HepG2 (cell line): ENCODE measurements at regions of chr20 and their contacts with region 1.

Region 1: GRCh38 chr20:40990542-40991120 is 38.0 kb upstream of the TOP1 start:
- DNase-seq: peak; percentile 93
- ATAC-seq: peak; percentile 100
- H3K4me3 ChIP-seq: peak overlapping the region in 1 of 3 experiments; percentile 13; a peak in 1 of 6 replicates
- H3K27ac ChIP-seq: no peak overlapping the region
- H3K4me1 ChIP-seq: peaks cover 19% of the 10 kb centered on the region
- H3K27me3 ChIP-seq: no peaks in the 10 kb centered on the region
- CTCF ChIP-seq: peak; percentile 99
- EP300 ChIP-seq: no peak
- POLR2A ChIP-seq: no peak
- RAD21 ChIP-seq: peak; percentile 97

Region 2: GRCh38 chr20:40970201-40970600 is 20.4 kb before region 1 on chr20:
- CTCF ChIA-PET with region 1: interaction called, 3 read pairs
- POLR2A ChIA-PET with region 1: no interaction called
- in situ Hi-C with region 1: no loop called
- intact Hi-C with region 1: loop called (anchors 2 kb)
- DNase-seq: no peak
- ATAC-seq: no peak
- H3K4me3 ChIP-seq: no peak overlapping the region
- H3K27ac ChIP-seq: no peak overlapping the region
- H3K4me1 ChIP-seq: peaks cover 25% of the 10 kb centered on the region
- H3K27me3 ChIP-seq: peaks cover 4 to 8% of the 10 kb centered on the region in 2 experiments; a peak in 2 of 5 replicates
- CTCF ChIP-seq: 0 out of 2 replicates have a peak, but pooled peaks have one; percentile 21
- EP300 ChIP-seq: no peak
- POLR2A ChIP-seq: no peak
- RAD21 ChIP-seq: no peak

Region 3: GRCh38 chr20:41028348-41029148 is 37.9 kb after region 1 on chr20 and contains the start of gene TOP1:
- CTCF ChIA-PET with region 1: no interaction called
- POLR2A ChIA-PET with region 1: interaction called, 13 read pairs
- in situ Hi-C with region 1: no loop called
- intact Hi-C with region 1: no loop called
- DNase-seq: peak; percentile 100
- ATAC-seq: peak; percentile 94
- H3K4me3 ChIP-seq: peak within 1 kb of the TSS; percentile 91 to 95 (median 95)
- H3K27ac ChIP-seq: peak within 1 kb of the TSS; percentile 82
- H3K4me1 ChIP-seq: peaks cover 53% of the 10 kb centered on the region
- H3K27me3 ChIP-seq: peaks cover 2 to 4% of the 10 kb centered on the region in 2 experiments; a peak in 2 of 5 replicates
- CTCF ChIP-seq: peak; percentile 2; the same call in 1 of the 2 replicates
- EP300 ChIP-seq: peak; percentile 15 to 79; a peak in 2 of 4 replicates
- POLR2A ChIP-seq: peak; percentile 98 to 99
- RAD21 ChIP-seq: peak; percentile 71
- total RNA-seq, gene TOP1: 19.4 and 75.3 TPM in 2 replicates

Region 4: DNA sequence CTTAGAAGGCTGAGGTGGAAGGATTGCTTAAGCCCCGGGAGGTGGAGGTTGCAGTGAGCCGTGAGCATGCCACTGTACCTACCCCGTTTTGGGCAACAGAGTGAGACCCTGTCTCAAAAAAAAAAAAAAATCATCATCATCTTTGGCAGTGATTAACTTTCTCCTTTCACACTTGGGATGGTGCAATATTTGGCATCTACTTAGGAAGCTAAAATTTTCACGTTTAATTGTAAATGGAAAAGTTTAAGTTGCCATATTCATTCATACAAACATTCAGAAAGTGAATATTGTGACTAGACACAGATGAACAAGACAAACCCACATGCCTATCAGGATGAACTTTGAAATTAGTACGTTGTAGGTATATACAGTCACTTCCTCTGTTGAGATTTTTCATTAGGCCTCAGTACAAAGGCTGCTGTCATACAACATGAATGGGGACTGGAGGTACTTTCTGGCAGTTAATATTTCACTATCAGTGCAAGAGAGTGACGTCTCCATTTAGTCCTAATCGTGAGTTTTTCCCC is 48.3 kb after region 1 on chr20:
- CTCF ChIA-PET with region 1: no interaction called
- POLR2A ChIA-PET with region 1: interaction called, 3 read pairs
- in situ Hi-C with region 1: no loop called
- intact Hi-C with region 1: loop called (anchors 1 kb)
- DNase-seq: peak; percentile 99
- ATAC-seq: peak; percentile 98
- H3K4me3 ChIP-seq: peak overlapping the region; percentile 26 to 57 (median 39); a peak in 5 of 6 replicates
- H3K27ac ChIP-seq: peak overlapping the region; percentile 84
- H3K4me1 ChIP-seq: peaks cover 93% of the 10 kb centered on the region
- H3K27me3 ChIP-seq: no peaks in the 10 kb centered on the region
- CTCF ChIP-seq: no peak
- EP300 ChIP-seq: peak; percentile 56 to 83; a peak in 3 of 4 replicates
- POLR2A ChIP-seq: peak; percentile 34 to 74; a peak in 3 of 4 replicates
- RAD21 ChIP-seq: no peak

Region 5: GRCh38 chr20:41078329-41078728 is 87.7 kb after region 1 on chr20:
- CTCF ChIA-PET with region 1: interaction called, 25 read pairs
- POLR2A ChIA-PET with region 1: interaction called, 3 read pairs
- in situ Hi-C with region 1: loop called (anchors 5 kb)
- intact Hi-C with region 1: loop called (anchors 1 kb)
- DNase-seq: peak; percentile 77
- ATAC-seq: peak; percentile 91
- H3K4me3 ChIP-seq: no peak overlapping the region
- H3K27ac ChIP-seq: no peak overlapping the region
- H3K4me1 ChIP-seq: peaks cover 12% of the 10 kb centered on the region
- H3K27me3 ChIP-seq: no peaks in the 10 kb centered on the region
- CTCF ChIP-seq: peak; percentile 59
- EP300 ChIP-seq: no peak
- POLR2A ChIP-seq: no peak
- RAD21 ChIP-seq: peak; percentile 71

Region 6: GRCh38 chr20:41095110-41095969 is 104.7 kb after region 1 on chr20:
- CTCF ChIA-PET with region 1: interaction called, 34 read pairs
- POLR2A ChIA-PET with region 1: interaction called, 13 read pairs
- in situ Hi-C with region 1: no loop called
- intact Hi-C with region 1: loop called (anchors 1 kb)
- DNase-seq: peak; percentile 60
- ATAC-seq: peak; percentile 82
- H3K4me3 ChIP-seq: no peak overlapping the region
- H3K27ac ChIP-seq: no peak overlapping the region
- H3K4me1 ChIP-seq: no peaks in the 10 kb centered on the region
- H3K27me3 ChIP-seq: no peaks in the 10 kb centered on the region
- CTCF ChIP-seq: peak; percentile 87
- EP300 ChIP-seq: no peak
- POLR2A ChIP-seq: no peak
- RAD21 ChIP-seq: peak; percentile 81